PC-3 (cell line): ENCODE measurements at regions of chr22 and their contacts with region 1.

Region 1: DNA sequence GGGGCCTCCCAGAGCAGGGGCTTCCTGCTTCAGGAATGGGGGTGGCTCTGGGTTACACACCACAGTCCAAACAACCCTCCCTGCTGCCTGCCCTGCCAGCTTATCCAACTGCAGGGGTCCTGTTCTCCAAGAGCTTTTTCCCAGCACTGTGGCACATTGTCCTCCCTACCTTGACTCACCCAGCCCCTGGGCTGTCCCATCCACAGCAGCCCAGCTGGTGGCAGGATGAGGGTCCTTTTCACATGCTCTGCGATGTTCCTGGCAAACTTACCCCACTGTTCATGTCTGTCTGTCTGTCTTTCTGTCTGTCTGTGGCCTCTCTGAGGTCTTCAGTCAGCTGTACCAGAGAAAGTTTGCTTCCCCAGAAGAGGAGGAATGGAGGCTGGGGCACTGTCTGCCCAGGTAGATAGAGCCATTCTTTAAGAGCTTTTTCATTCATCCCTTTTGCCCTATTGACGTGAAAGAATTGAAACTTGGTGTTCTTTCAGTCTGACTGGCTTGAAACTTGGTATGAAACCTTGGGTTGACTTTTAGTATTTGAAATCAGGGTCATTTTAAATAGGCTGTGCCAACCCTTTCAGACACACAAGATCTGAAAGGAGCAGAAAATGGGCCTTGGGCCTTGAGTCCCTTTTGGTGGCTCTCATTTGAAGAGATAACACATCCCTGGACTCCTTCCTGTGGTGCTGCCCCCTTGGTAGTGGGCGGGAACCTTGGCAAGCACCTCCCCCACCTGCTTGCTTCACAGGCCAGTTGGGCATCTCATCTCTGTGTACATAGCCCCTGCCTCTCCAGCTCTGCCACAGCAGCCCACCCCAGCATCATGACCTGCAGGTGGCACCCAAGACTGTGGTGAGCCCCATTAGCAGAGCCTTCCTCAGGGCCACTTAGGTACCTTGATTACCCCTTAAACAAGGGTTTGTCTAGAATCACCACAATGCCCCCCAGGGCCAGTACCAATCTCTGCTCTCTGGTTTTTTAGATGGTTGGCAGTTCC is 74.6 kb upstream of the SUSD2 start:
- DNase-seq: no peak
- ATAC-seq: no peak
- H3K4me3 ChIP-seq: no peak overlapping the region
- H3K27ac ChIP-seq: no peak overlapping the region
- H3K4me1 ChIP-seq: no peaks in the 10 kb centered on the region
- H3K27me3 ChIP-seq: no peaks in the 10 kb centered on the region
- CTCF ChIP-seq: 0 out of 2 replicates have a peak, but pooled peaks have one; percentile 20

Region 2: GRCh38 chr22:24175160-24175808 is 68.6 kb after region 1 on chr22:
- CTCF ChIA-PET with region 1: interaction called, 12 read pairs
- POLR2A ChIA-PET with region 1: no interaction called
- intact Hi-C with region 1: no loop called
- DNase-seq: peak; percentile 67
- ATAC-seq: peak; percentile 92
- H3K4me3 ChIP-seq: no peak overlapping the region
- H3K27ac ChIP-seq: no peak overlapping the region
- H3K4me1 ChIP-seq: no peaks in the 10 kb centered on the region
- H3K27me3 ChIP-seq: no peaks in the 10 kb centered on the region
- CTCF ChIP-seq: peak; percentile 77